WTC11 (cell line): ENCODE measurements at regions of chr3 and their contacts with region 1.

Region 1: DNA sequence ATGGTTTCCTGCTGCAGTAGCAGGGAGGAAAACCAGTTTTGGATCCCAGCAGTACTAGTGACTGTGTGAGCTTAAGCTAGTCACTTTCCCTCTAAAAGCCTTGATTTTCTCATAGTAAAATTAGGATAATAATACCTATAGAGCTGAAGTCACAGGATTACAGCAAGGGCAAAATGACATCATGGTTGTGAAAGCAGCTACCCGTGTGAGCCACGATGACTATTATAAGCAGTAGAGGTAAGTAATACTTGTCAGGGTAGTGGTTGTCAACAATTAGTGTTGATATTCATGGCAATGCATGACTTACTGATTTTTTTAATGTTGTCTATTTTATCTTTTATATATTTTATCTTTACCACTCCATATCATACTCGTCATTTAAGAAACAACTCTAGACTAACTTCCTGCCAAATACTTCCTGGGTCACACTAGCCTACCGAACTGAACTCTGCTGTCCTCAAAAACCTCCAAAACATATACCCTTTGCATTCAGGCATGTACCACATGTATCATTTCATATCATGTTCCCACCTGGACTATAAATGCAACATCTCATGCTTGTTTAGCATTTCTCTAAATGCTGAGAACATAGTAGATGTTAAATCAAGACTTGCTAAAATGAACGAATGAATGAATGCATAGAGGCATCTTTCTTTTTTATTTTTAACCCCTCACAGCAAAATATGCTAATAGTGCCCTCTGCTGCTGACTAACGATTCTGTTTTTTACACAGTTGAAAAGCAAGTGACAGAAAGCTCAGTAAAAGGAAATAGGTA is 172.6 kb downstream of the P3H2 start:
- DNase-seq: no peak
- ATAC-seq: peak; percentile 55
- H3K4me3 Mint-ChIP-seq: no peak overlapping the region
- H3K27ac Mint-ChIP-seq: no peak overlapping the region
- H3K4me1 Mint-ChIP-seq: no peaks in the 10 kb centered on the region
- H3K27me3 Mint-ChIP-seq: no peaks in the 10 kb centered on the region
- CTCF ChIP-seq: peak; percentile 53

Region 2: GRCh38 chr3:189272504-189273119 is 675.5 kb before region 1 on chr3:
- CTCF ChIA-PET with region 1: interaction called, 42 read pairs
- POLR2A ChIA-PET with region 1: no interaction called
- DNase-seq: no peak
- ATAC-seq: peak; percentile 91
- H3K4me3 Mint-ChIP-seq: no peak overlapping the region
- H3K27ac Mint-ChIP-seq: no peak overlapping the region
- H3K4me1 Mint-ChIP-seq: peaks cover 11% of the 10 kb centered on the region
- H3K27me3 Mint-ChIP-seq: no peaks in the 10 kb centered on the region
- CTCF ChIP-seq: peak; percentile 22; the same call in 1 of the 2 replicates

Region 3: GRCh38 chr3:189688262-189688661 is 259.9 kb before region 1 on chr3:
- CTCF ChIA-PET with region 1: interaction called, 24 read pairs
- POLR2A ChIA-PET with region 1: no interaction called
- DNase-seq: no peak
- ATAC-seq: no peak
- H3K4me3 Mint-ChIP-seq: no peak overlapping the region
- H3K27ac Mint-ChIP-seq: no peak overlapping the region
- H3K4me1 Mint-ChIP-seq: no peaks in the 10 kb centered on the region
- H3K27me3 Mint-ChIP-seq: no peaks in the 10 kb centered on the region
- CTCF ChIP-seq: no peak

Region 4: GRCh38 chr3:189786479-189787064 is 161.6 kb before region 1 on chr3:
- CTCF ChIA-PET with region 1: interaction called, 22 read pairs
- POLR2A ChIA-PET with region 1: no interaction called
- DNase-seq: peak; percentile 24
- ATAC-seq: peak; percentile 58
- H3K4me3 Mint-ChIP-seq: no peak overlapping the region
- H3K27ac Mint-ChIP-seq: no peak overlapping the region
- H3K4me1 Mint-ChIP-seq: peaks cover 17% of the 10 kb centered on the region
- H3K27me3 Mint-ChIP-seq: peaks cover 20% of the 10 kb centered on the region
- CTCF ChIP-seq: no peak